HEK293 (cell line): ENCODE measurements at regions of chr17 and their contacts with region 1.

Region 1: GRCh38 chr17:81833160-81833920 is at the start of gene MCRIP1:
- H3K4me3 ChIP-seq: peak within 1 kb of the TSS; percentile 77
- H3K27ac ChIP-seq: peak within 1 kb of the TSS; percentile 95
- H3K4me1 ChIP-seq: no peaks in the 10 kb centered on the region
- CTCF ChIP-seq: no peak

Region 2: GRCh38 chr17:81821603-81822311 is 11.6 kb before region 1 on chr17:
- CTCF ChIA-PET with region 1: interaction called, 12 read pairs
- POLR2A ChIA-PET with region 1: interaction called, 8 read pairs
- H3K4me3 ChIP-seq: no peak overlapping the region
- H3K27ac ChIP-seq: peak overlapping the region; percentile 44; the same call in 1 of the 2 replicates
- H3K4me1 ChIP-seq: peaks cover 10% of the 10 kb centered on the region
- CTCF ChIP-seq: peak; percentile 74; the same call in 1 of the 2 replicates